T-cell (primary cell): ENCODE measurements at regions of chr16 and their contacts with region 1.

Region 1: GRCh38 chr16:83316458-83316857 is 491.3 kb upstream of the HSBP1 start:
- DNase-seq: no peak
- ATAC-seq: no peak
- H3K4me3 ChIP-seq: no peak overlapping the region
- H3K4me3 Mint-ChIP-seq: no peak overlapping the region
- H3K27ac ChIP-seq: no peak overlapping the region
- H3K27ac Mint-ChIP-seq: no peak overlapping the region
- H3K4me1 ChIP-seq: no peaks in the 10 kb centered on the region
- H3K4me1 Mint-ChIP-seq: no peaks in the 10 kb centered on the region
- H3K27me3 ChIP-seq: no peaks in the 10 kb centered on the region
- H3K27me3 Mint-ChIP-seq: no peaks in the 10 kb centered on the region

Region 2: DNA sequence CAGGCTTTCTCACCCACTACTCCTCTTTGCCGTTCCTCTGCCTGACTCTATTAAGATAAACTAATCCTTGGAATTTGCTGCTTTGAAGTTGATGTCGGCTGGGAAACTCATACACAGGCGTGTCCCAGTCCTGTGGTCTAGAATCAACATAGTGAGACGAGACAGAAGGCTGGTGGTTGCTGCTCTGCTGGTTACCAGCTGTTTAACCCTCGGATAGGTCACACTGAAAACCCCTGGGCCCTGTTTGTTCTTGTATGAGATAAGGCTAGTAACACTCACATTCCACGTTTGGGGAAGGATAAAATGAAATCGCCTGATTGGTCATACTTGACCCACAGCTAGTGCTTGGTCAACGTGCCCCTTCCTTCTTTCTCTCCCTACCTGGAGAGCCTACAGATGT is 172.7 kb before region 1 on chr16:
- CTCF ChIA-PET with region 1: interaction called in 1 of 2 experiments, 10 read pairs
- POLR2A ChIA-PET with region 1: no interaction called
- DNase-seq: no peak
- ATAC-seq: no peak
- H3K4me3 ChIP-seq: no peak overlapping the region
- H3K4me3 Mint-ChIP-seq: no peak overlapping the region
- H3K27ac ChIP-seq: no peak overlapping the region
- H3K27ac Mint-ChIP-seq: no peak overlapping the region
- H3K4me1 ChIP-seq: no peaks in the 10 kb centered on the region
- H3K4me1 Mint-ChIP-seq: no peaks in the 10 kb centered on the region
- H3K27me3 ChIP-seq: peaks cover 0 to 4% of the 10 kb centered on the region in 2 experiments
- H3K27me3 Mint-ChIP-seq: no peaks in the 10 kb centered on the region